ENCODE measurements at regions of chr3 and their contacts with region 1.

Region 1: GRCh38 chr3:52406231-52406661 is 38.7 kb downstream of the SEMA3G start:
- DNase-seq: no peak

Region 2: DNA sequence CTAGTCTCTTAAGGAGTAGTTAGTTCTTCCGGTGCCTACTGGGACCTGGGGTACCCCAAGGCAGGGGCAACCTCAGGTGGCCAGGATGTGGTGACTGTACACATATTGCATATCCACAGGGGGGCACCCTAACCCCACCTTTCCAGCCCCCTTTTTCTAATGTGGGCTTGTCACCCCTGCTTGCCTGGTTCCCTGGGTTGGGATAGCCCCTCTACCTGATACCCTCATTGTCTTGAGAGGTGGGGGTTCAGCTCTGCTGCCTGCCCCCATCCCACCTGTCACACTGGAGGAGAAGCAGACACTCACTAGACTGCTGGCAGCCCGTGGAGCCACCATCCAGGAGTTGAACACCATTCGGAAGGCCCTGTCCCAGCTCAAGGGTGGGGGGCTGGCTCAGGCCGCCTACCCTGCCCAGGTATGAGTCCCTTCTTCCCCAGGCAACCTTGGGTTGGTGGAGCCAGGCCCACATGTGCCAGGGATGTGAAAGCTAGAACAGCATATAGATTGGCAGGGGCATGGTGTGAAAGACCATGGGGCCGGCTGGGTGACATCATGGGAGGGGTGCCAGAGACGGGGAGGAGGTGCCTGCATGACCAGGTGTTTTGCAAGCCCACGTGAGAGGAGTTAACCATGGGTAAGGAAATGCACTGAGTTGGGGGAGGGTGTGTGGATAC is 114.6 kb before region 1 on chr3:
- intact Hi-C with region 1: loop called (anchors 10 kb)
- DNase-seq: peak in 22 of 42 donors; percentile 22 to 59 (median 35)

Region 3: GRCh38 chr3:52313774-52314188 is 92.5 kb before region 1 on chr3:
- intact Hi-C with region 1: no loop called
- DNase-seq: peak in 9 of 42 donors; percentile 4 to 60 (median 16)

Region 4: DNA sequence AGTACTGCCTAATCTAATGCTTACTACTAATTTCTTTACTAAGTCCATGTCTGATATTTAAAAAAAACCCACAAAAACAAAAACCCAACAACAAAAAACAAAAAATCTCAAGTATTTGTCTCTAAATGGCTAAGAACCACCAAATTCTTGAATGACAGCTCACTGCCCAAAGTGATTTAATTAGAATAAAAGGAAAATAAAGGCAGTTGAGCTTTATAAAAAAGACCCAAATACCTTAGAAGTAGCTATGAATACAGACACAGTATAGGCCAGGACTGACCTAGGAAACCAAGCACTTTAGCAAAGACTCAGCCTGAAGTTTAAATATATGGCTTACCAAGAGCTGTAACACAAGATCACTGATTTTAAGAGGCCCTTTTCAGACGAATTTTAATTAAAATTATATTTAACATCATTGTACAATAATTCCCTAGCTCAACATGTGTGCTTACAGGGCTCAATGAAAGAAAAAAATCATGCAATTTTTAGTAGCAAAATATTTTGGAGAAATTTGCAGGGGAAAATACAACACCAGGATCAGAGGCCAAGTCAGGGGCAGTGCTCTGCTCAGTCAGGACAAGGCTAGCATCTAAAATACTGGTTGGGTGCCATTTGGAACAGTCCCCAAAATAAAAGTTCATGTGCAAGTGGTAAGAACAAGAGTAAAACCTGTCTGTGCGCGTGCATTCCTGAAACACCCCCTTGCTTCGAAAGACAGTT is 154.9 kb after region 1 on chr3:
- intact Hi-C with region 1: no loop called
- DNase-seq: no peak

Region 5: DNA sequence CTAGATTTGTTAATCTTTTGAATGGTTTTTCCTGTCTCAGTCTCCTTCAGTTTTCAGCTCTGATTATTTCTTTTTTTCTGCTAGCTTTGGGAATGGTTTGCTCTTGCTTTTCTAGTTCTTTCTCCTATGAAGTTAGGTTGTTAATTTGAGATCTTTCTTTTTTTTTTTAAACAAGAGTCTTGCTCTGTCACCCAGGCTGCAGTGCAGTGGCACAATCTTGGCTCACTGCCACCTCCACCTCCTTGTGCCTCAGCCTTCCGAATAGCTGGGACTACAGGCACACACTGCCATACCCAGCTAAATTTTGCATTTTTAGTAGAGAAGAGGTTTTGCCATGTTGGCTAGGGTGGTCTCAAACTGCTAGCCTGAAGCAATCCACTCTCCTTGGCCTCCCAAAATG is 186.9 kb after region 1 on chr3:
- intact Hi-C with region 1: no loop called
- DNase-seq: peak; percentile 19 to 84 (median 62)

Region 6: DNA sequence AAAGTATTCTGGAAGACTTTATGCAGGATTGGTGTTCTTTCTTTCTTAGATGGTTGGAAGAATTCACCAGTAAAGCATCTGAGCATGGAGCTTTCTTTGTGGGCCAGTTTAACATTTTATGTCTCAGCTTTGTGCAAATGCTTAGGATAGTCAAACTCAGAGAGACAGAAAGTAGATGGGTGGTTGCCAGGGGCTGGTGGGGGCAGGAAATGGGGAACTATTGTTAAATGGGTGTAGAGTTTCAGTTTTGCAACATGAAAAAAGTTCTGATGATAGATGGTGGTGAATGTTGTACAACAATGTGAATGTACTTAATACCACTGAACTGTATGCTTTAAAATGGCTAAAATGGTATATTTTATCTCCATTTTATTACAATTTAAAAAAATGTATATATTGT is 324.4 kb after region 1 on chr3:
- intact Hi-C with region 1: no loop called
- DNase-seq: no peak

Measured in head of caudate nucleus (tissue), 42 donors.